AG04449 (cell line): ENCODE measurements at regions of chr6 and their contacts with region 1.

Region 1: GRCh38 chr6:136226027-136226673 is 24.0 kb downstream of the MTFR2 start:
- DNase-seq: no peak
- H3K4me3 ChIP-seq: no peak overlapping the region
- CTCF ChIP-seq: peak; percentile 88

Region 2: DNA sequence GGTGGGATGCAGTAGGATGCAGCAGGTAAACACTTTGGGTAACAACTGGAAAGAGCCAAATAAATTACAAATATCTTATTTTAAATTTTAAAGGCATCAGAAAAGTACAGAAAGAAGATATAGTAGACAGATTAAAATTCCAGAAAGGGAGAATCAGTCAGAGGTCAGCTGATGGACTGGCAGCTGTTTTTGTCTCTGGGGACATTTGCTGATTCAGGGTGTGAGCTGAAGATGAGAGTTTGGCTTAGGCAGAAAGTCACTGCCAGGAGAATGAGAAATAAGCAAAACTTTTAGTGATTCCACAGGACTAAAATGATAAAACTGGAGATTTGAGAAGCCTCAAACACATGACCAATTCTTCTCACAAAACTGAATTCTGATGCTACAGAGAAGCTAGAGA is 768.1 kb before region 1 on chr6:
- CTCF ChIA-PET with region 1: interaction called, 13 read pairs
- POLR2A ChIA-PET with region 1: no interaction called
- DNase-seq: no peak
- H3K4me3 ChIP-seq: no peak overlapping the region
- CTCF ChIP-seq: no peak

Region 3: DNA sequence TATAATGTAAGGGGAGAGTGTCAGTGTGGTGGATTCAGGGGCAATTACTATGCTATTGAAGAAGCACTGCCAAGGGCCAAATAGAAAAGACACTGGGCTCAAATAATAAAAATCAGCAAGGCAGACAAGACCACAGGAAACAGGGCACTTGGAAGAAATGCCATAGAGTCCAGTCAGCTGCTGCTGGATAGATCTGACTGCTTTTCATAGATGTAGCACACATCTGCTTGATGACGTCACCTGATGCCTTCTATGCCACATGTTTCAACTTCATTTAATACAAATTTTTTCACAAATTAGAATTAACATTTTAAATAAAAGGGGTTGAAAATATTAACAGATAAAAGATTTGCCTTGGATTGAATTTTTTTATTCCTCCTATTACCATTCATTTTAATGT is 704.7 kb before region 1 on chr6:
- CTCF ChIA-PET with region 1: interaction called, 13 read pairs
- POLR2A ChIA-PET with region 1: no interaction called
- DNase-seq: no peak
- H3K4me3 ChIP-seq: no peak overlapping the region
- CTCF ChIP-seq: no peak

Region 4: DNA sequence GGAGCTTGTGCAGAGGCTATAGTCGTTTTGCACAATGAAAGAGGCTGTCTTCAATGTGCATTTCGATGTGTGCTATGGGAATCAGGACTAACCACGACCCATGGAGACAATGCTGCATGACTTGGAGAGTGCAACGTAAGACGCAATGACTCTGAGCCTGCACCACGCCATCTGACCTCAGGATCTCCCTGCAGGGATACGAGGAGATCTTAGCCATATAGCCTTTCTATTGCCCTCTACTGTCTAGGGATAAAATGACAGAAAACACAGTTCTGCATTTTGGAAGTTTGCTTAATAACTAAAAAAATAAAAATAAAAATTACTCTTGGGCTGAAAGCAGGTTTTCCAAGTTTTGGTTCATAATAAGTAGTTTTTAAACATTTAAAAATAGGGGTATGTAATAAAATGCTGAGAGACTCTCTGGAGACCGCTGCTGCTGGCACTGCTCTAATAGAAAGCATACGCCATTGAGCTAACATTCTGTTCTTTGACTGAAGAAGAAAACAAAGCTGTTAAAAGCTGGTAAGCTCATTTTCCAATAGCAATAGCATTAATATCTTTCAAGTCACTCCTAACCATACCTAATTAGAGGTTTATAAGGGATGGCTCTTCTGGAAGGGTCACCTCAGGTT is 287.5 kb before region 1 on chr6:
- CTCF ChIA-PET with region 1: interaction called, 17 read pairs
- POLR2A ChIA-PET with region 1: no interaction called
- DNase-seq: no peak
- H3K4me3 ChIP-seq: no peak overlapping the region
- CTCF ChIP-seq: peak; percentile 24

Region 5: DNA sequence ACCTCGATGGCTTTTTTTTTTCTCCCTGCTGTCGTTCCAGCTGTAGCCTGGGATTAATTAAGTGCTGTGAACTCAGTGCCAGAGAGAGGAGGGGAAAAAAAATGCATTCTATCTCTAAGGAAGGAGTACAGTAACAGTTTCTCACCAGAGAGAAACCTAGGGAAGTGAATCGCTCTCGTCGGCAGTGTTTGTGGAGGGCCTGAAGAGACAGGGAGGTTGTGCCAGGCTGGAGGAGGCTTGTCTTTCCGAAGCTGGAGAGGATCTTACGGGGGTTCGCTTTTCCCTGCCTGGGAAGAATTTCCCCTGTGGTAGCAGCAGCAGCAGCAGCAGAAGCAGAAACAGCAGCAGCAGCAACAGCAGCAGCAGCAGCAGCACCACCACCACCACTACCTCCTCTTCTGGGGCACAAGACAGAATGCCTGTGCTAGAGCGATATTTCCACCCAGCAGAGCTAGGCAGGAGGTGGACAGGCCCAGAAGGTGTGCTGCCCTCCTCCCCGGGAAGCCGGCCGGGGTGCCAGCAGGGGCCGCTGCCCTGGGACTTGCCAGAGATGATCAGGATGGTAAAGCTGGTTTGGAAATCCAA is 188.2 kb before region 1 on chr6:
- CTCF ChIA-PET with region 1: interaction called, 26 read pairs
- POLR2A ChIA-PET with region 1: no interaction called
- DNase-seq: no peak
- H3K4me3 ChIP-seq: peak overlapping the region; percentile 67
- CTCF ChIP-seq: peak; percentile 64

Region 6: DNA sequence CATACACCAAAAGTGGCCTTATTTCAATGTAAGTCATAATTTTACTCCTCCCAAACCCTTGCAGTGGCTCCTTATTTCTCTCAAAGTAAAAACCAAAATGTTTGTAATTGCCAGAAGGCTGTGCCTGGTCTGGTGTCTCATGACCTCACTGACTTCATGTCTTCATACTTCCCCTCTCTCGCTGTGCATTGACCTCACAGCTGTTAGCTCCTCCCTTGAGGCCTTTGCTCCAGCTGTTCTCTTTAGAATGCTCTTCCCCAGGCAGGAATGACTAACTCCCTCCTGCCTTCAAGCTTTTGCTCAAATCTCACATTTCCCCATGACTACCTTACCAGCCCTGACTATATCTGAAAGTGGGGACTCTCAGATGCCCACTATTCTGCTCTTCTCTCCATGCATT is 59.3 kb before region 1 on chr6:
- CTCF ChIA-PET with region 1: no interaction called
- POLR2A ChIA-PET with region 1: no interaction called
- DNase-seq: no peak
- H3K4me3 ChIP-seq: no peak overlapping the region
- CTCF ChIP-seq: no peak

Region 7: GRCh38 chr6:136244061-136244616 is 18.0 kb after region 1 on chr6:
- CTCF ChIA-PET with region 1: interaction called, 77 read pairs
- POLR2A ChIA-PET with region 1: no interaction called
- DNase-seq: peak; percentile 46
- H3K4me3 ChIP-seq: no peak overlapping the region
- CTCF ChIP-seq: no peak